ENCODE measurements at regions of chr5 and their contacts with region 1.

Region 1: DNA sequence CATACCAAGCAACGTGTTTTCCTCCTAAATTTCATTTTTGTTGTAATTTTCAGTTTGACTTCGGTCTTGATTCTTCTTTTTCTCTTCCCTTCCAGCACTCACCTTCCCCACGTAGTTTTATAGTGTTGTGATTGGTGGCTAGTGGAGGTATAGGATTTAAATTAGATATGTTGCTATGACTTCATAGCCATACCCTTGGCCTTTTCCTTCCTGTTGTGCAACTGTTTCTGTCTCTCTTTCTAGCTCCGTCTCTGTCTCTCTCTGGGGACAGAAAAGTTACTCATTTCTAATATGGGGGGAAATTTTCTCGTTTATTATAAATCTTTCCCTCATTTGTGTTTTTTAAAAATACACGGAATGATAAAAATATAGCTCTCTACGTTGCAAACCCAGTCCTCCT is 20.6 kb upstream of the C5orf24 start:
- DNase-seq: no peak
- ATAC-seq: no peak
- H3K4me3 Mint-ChIP-seq: no peak overlapping the region
- H3K27ac Mint-ChIP-seq: no peak overlapping the region
- H3K4me1 Mint-ChIP-seq: no peaks in the 10 kb centered on the region
- H3K27me3 Mint-ChIP-seq: no peaks in the 10 kb centered on the region
- CTCF ChIP-seq: no peak

Region 2: DNA sequence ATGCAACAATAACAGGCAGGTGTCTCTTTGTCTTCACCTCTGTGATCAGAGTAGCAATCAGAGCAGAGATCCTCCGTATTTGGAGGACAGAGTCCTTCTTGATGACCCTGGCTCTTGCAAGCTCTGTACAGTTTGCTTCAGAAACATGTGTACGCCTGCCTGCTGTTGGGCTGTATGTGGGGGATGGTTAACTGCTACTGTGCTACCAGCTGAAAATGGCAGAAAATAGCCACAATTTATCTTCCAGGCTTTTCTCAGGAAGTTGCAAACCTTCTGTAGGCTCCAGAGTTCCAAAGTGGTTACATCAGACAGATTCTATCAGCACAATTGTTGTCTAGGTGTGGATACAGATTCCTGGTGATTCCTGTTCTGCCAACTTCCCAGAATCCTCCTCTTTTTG is 31.1 kb before region 1 on chr5:
- CTCF ChIA-PET with region 1: no interaction called
- POLR2A ChIA-PET with region 1: no interaction called
- intact Hi-C with region 1: no loop called
- DNase-seq: no peak
- ATAC-seq: no peak
- H3K4me3 Mint-ChIP-seq: no peak overlapping the region
- H3K27ac Mint-ChIP-seq: no peak overlapping the region
- H3K4me1 Mint-ChIP-seq: no peaks in the 10 kb centered on the region
- H3K27me3 Mint-ChIP-seq: no peaks in the 10 kb centered on the region
- CTCF ChIP-seq: no peak

Region 3: DNA sequence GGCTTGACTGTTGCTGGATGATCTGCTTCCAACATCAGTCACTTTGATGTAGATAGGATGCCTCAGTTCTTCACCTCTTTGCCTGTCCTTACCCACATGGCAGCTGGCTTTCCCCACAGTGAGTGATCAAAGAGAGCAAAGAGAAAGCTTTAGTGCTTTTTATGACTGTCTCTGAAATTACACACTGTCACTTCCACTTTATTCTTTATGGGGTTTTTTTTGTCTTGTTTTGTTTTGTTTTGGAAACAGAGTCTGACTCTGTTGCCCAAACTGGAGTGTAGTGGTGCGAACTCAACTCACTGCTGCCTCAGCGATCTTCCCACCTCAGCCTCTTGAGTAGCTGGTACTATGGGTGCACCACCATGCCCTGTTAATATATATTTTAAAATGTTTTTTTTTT is 11.8 kb before region 1 on chr5:
- CTCF ChIA-PET with region 1: no interaction called
- POLR2A ChIA-PET with region 1: no interaction called
- intact Hi-C with region 1: no loop called
- DNase-seq: peak; percentile 34
- ATAC-seq: peak; percentile 58
- H3K4me3 Mint-ChIP-seq: no peak overlapping the region
- H3K27ac Mint-ChIP-seq: peak overlapping the region; percentile 49
- H3K4me1 Mint-ChIP-seq: peaks cover 13% of the 10 kb centered on the region
- H3K27me3 Mint-ChIP-seq: no peaks in the 10 kb centered on the region
- CTCF ChIP-seq: no peak

Region 4: DNA sequence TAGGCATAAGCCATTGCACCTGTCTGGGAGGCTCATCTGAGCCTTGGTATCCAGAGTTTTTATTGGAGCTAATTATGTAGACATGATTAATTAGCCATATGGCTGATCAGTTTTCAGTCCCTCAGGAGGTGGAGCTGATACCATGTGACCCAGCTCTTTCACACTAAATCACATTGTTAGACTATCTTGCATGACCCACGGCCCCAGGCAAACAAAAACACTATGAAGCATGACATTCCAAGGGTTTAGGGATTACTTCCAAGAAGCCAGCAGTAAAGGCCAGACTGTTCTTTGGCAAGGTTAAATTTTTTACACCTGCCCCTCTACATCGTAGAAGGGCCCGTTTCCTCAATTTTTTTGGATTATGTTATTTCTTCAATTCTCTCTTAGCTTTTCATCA is 15.6 kb after region 1 on chr5:
- CTCF ChIA-PET with region 1: no interaction called
- POLR2A ChIA-PET with region 1: interaction called, 10 read pairs
- intact Hi-C with region 1: no loop called
- DNase-seq: no peak
- ATAC-seq: no peak
- H3K4me3 Mint-ChIP-seq: no peak overlapping the region
- H3K27ac Mint-ChIP-seq: no peak overlapping the region
- H3K4me1 Mint-ChIP-seq: peaks cover 9% of the 10 kb centered on the region
- H3K27me3 Mint-ChIP-seq: no peaks in the 10 kb centered on the region
- CTCF ChIP-seq: no peak

Region 5: DNA sequence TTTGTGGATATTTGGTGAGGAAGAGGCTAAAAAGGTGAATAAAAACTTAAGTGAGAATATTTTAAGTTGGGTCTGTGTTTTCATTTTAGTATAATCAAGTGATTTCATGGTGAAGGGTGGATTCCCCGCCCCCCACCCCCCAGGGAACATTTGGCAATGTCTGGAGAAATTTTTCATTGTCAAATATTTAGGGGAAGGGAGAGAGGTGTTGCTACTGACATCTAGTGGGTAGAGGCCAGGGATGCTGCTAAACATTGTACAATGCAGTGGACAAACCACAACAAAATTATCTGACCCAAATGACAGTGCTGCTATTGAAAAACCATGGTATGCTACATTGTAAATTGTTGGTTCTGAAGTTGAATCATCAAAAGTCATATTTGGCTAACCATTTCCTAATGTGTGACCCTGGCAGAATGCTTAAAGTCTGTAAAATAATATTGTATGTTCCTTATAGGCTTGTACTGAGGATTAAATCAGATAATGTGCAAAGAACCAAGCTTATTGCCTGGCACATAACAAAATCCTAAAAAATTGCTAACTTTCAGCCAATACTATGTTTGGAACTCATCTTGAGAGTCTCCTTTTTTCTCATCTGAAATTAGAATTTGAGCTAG is 26.2 kb after region 1 on chr5:
- CTCF ChIA-PET with region 1: no interaction called
- POLR2A ChIA-PET with region 1: no interaction called
- intact Hi-C with region 1: no loop called
- DNase-seq: no peak
- ATAC-seq: no peak
- H3K4me3 Mint-ChIP-seq: no peak overlapping the region
- H3K27ac Mint-ChIP-seq: no peak overlapping the region
- H3K4me1 Mint-ChIP-seq: peaks cover 46% of the 10 kb centered on the region
- H3K27me3 Mint-ChIP-seq: no peaks in the 10 kb centered on the region
- CTCF ChIP-seq: peak; percentile 31

Region 6: GRCh38 chr5:135337064-135337463 is 511.9 kb after region 1 on chr5:
- CTCF ChIA-PET with region 1: no interaction called
- POLR2A ChIA-PET with region 1: no interaction called
- intact Hi-C with region 1: no loop called
- DNase-seq: no peak
- ATAC-seq: no peak
- H3K4me3 Mint-ChIP-seq: no peak overlapping the region
- H3K27ac Mint-ChIP-seq: no peak overlapping the region
- H3K4me1 Mint-ChIP-seq: peaks cover 9% of the 10 kb centered on the region
- H3K27me3 Mint-ChIP-seq: no peaks in the 10 kb centered on the region
- CTCF ChIP-seq: no peak